Panc1 (cell line): ENCODE measurements at regions of chr7 and their contacts with region 1.

Region 1: DNA sequence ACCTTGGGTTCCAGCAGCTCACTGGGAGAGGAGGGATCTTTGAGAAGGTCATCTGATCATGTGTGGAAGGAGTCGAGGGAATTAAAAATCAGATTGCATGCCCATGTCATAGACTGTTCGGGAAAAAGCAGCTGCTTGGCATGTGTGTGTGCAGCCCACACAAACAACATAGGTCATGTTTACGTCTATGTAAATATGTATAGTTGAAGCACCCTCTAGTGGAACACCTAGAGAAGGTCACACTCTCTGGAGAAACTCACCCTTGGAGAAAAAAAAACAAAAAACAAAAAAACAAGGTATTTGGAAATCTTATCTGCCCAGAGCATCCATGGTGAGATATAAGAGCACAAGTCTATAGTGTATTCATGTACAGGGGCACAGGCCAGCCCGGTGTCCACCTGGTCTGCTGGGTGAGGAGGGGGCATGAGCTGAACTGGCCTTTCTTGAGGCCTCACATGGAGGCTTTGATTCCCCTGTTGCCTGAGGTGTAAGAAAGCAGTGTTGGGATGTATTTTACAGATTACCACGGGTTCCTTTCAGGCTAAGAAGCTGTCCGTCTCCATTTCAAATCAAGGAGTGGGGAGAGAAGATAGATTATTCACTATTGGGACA is 98.0 kb downstream of the NPY start:
- DNase-seq: peak; percentile 8
- ATAC-seq: peak; percentile 79; the same call in 1 of the 2 replicates
- H3K4me3 ChIP-seq: no peak overlapping the region
- H3K27ac ChIP-seq: no peak overlapping the region
- H3K4me1 ChIP-seq: no peaks in the 10 kb centered on the region
- H3K27me3 ChIP-seq: no peaks in the 10 kb centered on the region
- CTCF ChIP-seq: peak; percentile 72

Region 2: DNA sequence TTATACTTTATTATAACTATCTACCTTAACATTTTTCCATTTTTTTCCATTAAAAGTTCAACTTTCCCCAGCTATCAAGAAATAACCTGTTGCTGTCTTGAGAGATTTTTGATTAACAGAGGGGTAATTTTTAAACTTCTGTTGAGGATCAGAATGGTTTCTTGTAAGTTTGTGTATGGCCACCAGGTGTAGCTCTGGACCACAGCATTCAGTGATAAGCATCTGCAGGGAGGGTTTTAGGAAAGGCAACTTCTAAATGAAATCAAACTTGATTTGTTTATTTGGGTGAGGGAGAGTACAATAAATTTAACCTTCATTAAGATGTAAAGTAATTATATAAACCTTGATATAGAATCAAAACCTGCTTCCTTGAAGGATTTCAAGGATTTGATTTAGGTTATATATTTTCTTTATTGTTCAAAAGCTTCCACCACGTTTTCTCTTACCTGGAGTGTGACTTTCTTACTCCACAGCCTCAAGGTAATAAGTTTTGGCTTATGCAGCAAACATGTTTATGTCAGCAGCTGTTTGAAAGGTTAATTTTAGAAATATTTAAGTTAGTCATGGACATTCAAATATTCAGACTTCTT is 518.7 kb before region 1 on chr7:
- CTCF ChIA-PET with region 1: no interaction called
- POLR2A ChIA-PET with region 1: no interaction called
- in situ Hi-C with region 1: no loop called
- intact Hi-C with region 1: loop called (anchors 10 kb)
- DNase-seq: peak; percentile 39
- ATAC-seq: peak; percentile 85; the same call in 1 of the 2 replicates
- H3K4me3 ChIP-seq: no peak overlapping the region
- H3K27ac ChIP-seq: no peak overlapping the region
- H3K4me1 ChIP-seq: no peaks in the 10 kb centered on the region; the same call in 1 of the 2 replicates
- H3K27me3 ChIP-seq: no peaks in the 10 kb centered on the region
- CTCF ChIP-seq: peak; percentile 84; the same call in 1 of the 2 replicates

Region 3: GRCh38 chr7:24123061-24123460 is 258.9 kb before region 1 on chr7:
- CTCF ChIA-PET with region 1: no interaction called
- POLR2A ChIA-PET with region 1: no interaction called
- in situ Hi-C with region 1: no loop called
- intact Hi-C with region 1: no loop called
- DNase-seq: no peak
- ATAC-seq: no peak
- H3K4me3 ChIP-seq: no peak overlapping the region
- H3K27ac ChIP-seq: no peak overlapping the region
- H3K4me1 ChIP-seq: no peaks in the 10 kb centered on the region
- H3K27me3 ChIP-seq: 0 out of 2 replicates have a peak, but pooled peaks cover 5% of the 10 kb centered on the region
- CTCF ChIP-seq: no peak

Region 4: GRCh38 chr7:24279512-24279911 is 102.5 kb before region 1 on chr7:
- CTCF ChIA-PET with region 1: no interaction called
- POLR2A ChIA-PET with region 1: no interaction called
- in situ Hi-C with region 1: no loop called
- intact Hi-C with region 1: no loop called
- DNase-seq: no peak
- ATAC-seq: no peak
- H3K4me3 ChIP-seq: no peak overlapping the region
- H3K27ac ChIP-seq: no peak overlapping the region
- H3K4me1 ChIP-seq: no peaks in the 10 kb centered on the region
- H3K27me3 ChIP-seq: peaks cover 11% of the 10 kb centered on the region
- CTCF ChIP-seq: no peak

Region 5: GRCh38 chr7:24290004-24290641 is 91.9 kb before region 1 on chr7:
- CTCF ChIA-PET with region 1: interaction called, 3 read pairs
- POLR2A ChIA-PET with region 1: no interaction called
- in situ Hi-C with region 1: no loop called
- intact Hi-C with region 1: loop called (anchors 5 kb)
- DNase-seq: peak; percentile 36
- ATAC-seq: peak; percentile 97
- H3K4me3 ChIP-seq: no peak overlapping the region
- H3K27ac ChIP-seq: no peak overlapping the region
- H3K4me1 ChIP-seq: peaks cover 3% of the 10 kb centered on the region; the same call in 1 of the 2 replicates
- H3K27me3 ChIP-seq: peaks cover 35% of the 10 kb centered on the region
- CTCF ChIP-seq: peak; percentile 78

Region 6: GRCh38 chr7:24304494-24305095 is 77.4 kb before region 1 on chr7:
- CTCF ChIA-PET with region 1: no interaction called
- POLR2A ChIA-PET with region 1: no interaction called
- in situ Hi-C with region 1: no loop called
- intact Hi-C with region 1: no loop called
- DNase-seq: no peak
- ATAC-seq: no peak
- H3K4me3 ChIP-seq: no peak overlapping the region
- H3K27ac ChIP-seq: no peak overlapping the region
- H3K4me1 ChIP-seq: no peaks in the 10 kb centered on the region
- H3K27me3 ChIP-seq: 0 out of 2 replicates have a peak, but pooled peaks cover 2% of the 10 kb centered on the region
- CTCF ChIP-seq: no peak